ENCODE measurements at regions of chr7 and their contacts with region 1.

Region 1: GRCh38 chr7:85104432-85105205 is 82.2 kb downstream of the SEMA3D start:
- DNase-seq: peak; percentile 80
- ATAC-seq: peak; percentile 64
- H3K4me3 ChIP-seq: peak overlapping the region; percentile 42
- H3K27ac ChIP-seq: peak overlapping the region; percentile 81
- H3K4me1 ChIP-seq: peaks cover 40% of the 10 kb centered on the region
- H3K27me3 ChIP-seq: no peaks in the 10 kb centered on the region
- CTCF ChIP-seq: no peak

Region 2: DNA sequence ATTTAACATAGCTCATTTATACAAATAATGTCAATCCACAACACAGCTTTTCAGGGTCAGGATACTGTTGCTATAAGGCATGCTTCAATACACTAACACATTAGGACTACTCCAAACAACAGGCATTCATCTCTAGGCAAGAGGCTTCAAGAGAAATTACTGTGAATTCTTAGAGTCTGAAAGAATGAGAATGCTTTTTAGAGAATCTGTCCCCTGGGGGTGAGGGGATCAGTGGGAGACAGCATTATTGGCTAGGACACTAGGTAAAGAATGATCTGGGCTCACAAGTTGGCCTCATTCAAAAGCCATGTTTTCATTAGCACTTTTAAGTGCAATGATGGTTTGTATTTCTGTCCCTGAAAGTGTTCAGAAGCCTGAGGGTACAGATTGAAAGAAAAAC is 50.3 kb before region 1 on chr7:
- CTCF ChIA-PET with region 1: no interaction called
- POLR2A ChIA-PET with region 1: no interaction called
- intact Hi-C with region 1: loop called (anchors 5 kb)
- DNase-seq: no peak
- ATAC-seq: no peak
- H3K4me3 ChIP-seq: no peak overlapping the region
- H3K27ac ChIP-seq: no peak overlapping the region
- H3K4me1 ChIP-seq: peaks cover 6% of the 10 kb centered on the region
- H3K27me3 ChIP-seq: no peaks in the 10 kb centered on the region
- CTCF ChIP-seq: no peak

Region 3: DNA sequence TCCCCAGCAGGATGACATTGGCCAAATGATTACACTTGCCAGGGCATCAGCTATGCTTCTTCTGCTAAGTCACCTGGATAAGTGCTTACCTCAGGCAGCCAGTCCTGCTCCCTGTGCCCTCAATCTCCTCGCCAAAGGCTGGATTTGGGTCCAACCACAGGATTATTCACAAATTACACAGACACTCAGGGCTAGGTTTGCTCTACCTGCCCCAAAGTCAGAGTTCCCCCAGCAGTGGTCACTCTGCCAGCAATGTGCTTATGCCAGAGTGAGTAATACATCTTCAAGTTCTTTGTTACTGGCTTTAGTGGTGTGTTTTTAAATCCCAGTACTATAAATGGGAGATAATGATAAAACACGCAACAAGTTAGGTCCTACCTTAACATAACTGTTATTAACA is 272.0 kb after region 1 on chr7:
- CTCF ChIA-PET with region 1: no interaction called
- POLR2A ChIA-PET with region 1: no interaction called
- intact Hi-C with region 1: no loop called
- DNase-seq: peak; percentile 70
- ATAC-seq: peak; percentile 77
- H3K4me3 ChIP-seq: no peak overlapping the region
- H3K27ac ChIP-seq: no peak overlapping the region
- H3K4me1 ChIP-seq: no peaks in the 10 kb centered on the region
- H3K27me3 ChIP-seq: no peaks in the 10 kb centered on the region
- CTCF ChIP-seq: no peak

Measured in PC-3 (cell line).